K562 (cell line): ENCODE measurements at regions of chr1 and their contacts with region 1.

Region 1: GRCh38 chr1:15847100-15847892 is at the start of gene SPEN:
- DNase-seq: peak; percentile 95 to 100 (median 96)
- ATAC-seq: peak; percentile 87
- H3K4me3 ChIP-seq: peak within 1 kb of the TSS; percentile 62
- H3K27ac ChIP-seq: peak within 1 kb of the TSS; percentile 97
- H3K4me1 ChIP-seq: peaks cover 6 to 32% of the 10 kb centered on the region in 2 experiments
- H3K27me3 ChIP-seq: no peaks in the 10 kb centered on the region
- CTCF ChIP-seq: 0 out of 6 replicates have a peak, but pooled peaks of 2 of the 3 experiments have one; percentile 5 to 13
- EP300 ChIP-seq: no peak; the same call in none of the 2 replicates
- POLR2A ChIP-seq: peak; percentile 94
- RAD21 ChIP-seq: 0 out of 4 replicates have a peak, but pooled peaks have one; percentile 5 to 7
- polyA plus RNA-seq, gene SPEN: 5.7 to 13.1 TPM

Region 2: GRCh38 chr1:15820478-15820877 is 26.8 kb before region 1 on chr1:
- CTCF ChIA-PET with region 1: no interaction called
- POLR2A ChIA-PET with region 1: interaction called, 19 read pairs
- in situ Hi-C with region 1: no loop called
- intact Hi-C with region 1: no loop called
- DNase-seq: no peak
- ATAC-seq: no peak
- H3K4me3 ChIP-seq: no peak overlapping the region
- H3K27ac ChIP-seq: no peak overlapping the region
- H3K4me1 ChIP-seq: no peaks in the 10 kb centered on the region; a peak in 3 of 5 replicates
- H3K27me3 ChIP-seq: no peaks in the 10 kb centered on the region
- CTCF ChIP-seq: no peak
- EP300 ChIP-seq: no peak
- POLR2A ChIP-seq: no peak
- RAD21 ChIP-seq: no peak

Region 3: GRCh38 chr1:15858069-15858670 is 10.9 kb after region 1 on chr1:
- CTCF ChIA-PET with region 1: no interaction called
- POLR2A ChIA-PET with region 1: interaction called, 27 read pairs
- in situ Hi-C with region 1: no loop called
- intact Hi-C with region 1: no loop called
- DNase-seq: no peak
- ATAC-seq: peak; percentile 10; the same call in 1 of the 3 replicates
- H3K4me3 ChIP-seq: no peak overlapping the region
- H3K27ac ChIP-seq: peak overlapping the region; percentile 51; the same call in 1 of the 3 replicates
- H3K4me1 ChIP-seq: peaks cover 12 to 17% of the 10 kb centered on the region in 2 experiments
- H3K27me3 ChIP-seq: no peaks in the 10 kb centered on the region
- CTCF ChIP-seq: no peak
- EP300 ChIP-seq: no peak
- POLR2A ChIP-seq: no peak
- RAD21 ChIP-seq: no peak

Region 4: GRCh38 chr1:15866721-15867201 is 19.5 kb after region 1 on chr1:
- CTCF ChIA-PET with region 1: no interaction called
- POLR2A ChIA-PET with region 1: interaction called, 47 read pairs
- in situ Hi-C with region 1: no loop called
- intact Hi-C with region 1: no loop called
- DNase-seq: no peak
- ATAC-seq: no peak
- H3K4me3 ChIP-seq: no peak overlapping the region
- H3K27ac ChIP-seq: no peak overlapping the region
- H3K4me1 ChIP-seq: 0 out of 5 replicates have a peak, but pooled peaks cover 0 to 2% of the 10 kb centered on the region in 2 experiments
- H3K27me3 ChIP-seq: no peaks in the 10 kb centered on the region
- CTCF ChIP-seq: no peak
- EP300 ChIP-seq: no peak
- POLR2A ChIP-seq: no peak
- RAD21 ChIP-seq: no peak

Region 5: GRCh38 chr1:15885701-15886610 is 38.7 kb after region 1 on chr1:
- CTCF ChIA-PET with region 1: no interaction called
- POLR2A ChIA-PET with region 1: interaction called, 13 read pairs
- in situ Hi-C with region 1: no loop called
- intact Hi-C with region 1: loop called (anchors 2 kb)
- DNase-seq: peak; percentile 85 to 97 (median 91)
- ATAC-seq: peak; percentile 97
- H3K4me3 ChIP-seq: peak overlapping the region; percentile 24
- H3K27ac ChIP-seq: peak overlapping the region; percentile 85
- H3K4me1 ChIP-seq: peaks cover 14 to 23% of the 10 kb centered on the region in 2 experiments; a peak in 4 of 5 replicates
- H3K27me3 ChIP-seq: no peaks in the 10 kb centered on the region
- CTCF ChIP-seq: peak in 2 of 3 experiments; percentile 4 to 36; a peak in 3 of 6 replicates
- EP300 ChIP-seq: peak; percentile 84
- POLR2A ChIP-seq: peak; percentile 70
- RAD21 ChIP-seq: 0 out of 4 replicates have a peak, but pooled peaks of 1 of the 2 experiments have one; percentile 6